Activated CD8-positive, alpha-beta T cell treated with anti-CD3 and anti-CD28 coated beads, Interleukin-2, amount 10 ng/mL, durations not matched to agents 7 days and 5 days (primary cell): ENCODE measurements at regions of chr13 and their contacts with region 1.

Region 1: GRCh38 chr13:114314074-114314912 is at the start of gene CHAMP1:
- DNase-seq: peak; percentile 94
- ATAC-seq: peak; percentile 92
- H3K4me3 Mint-ChIP-seq: peak within 1 kb of the TSS; percentile 78
- H3K27ac Mint-ChIP-seq: peak within 1 kb of the TSS; percentile 78
- H3K4me1 Mint-ChIP-seq: peaks cover 47% of the 10 kb centered on the region
- H3K27me3 Mint-ChIP-seq: no peaks in the 10 kb centered on the region
- total RNA-seq, gene CHAMP1: 31.6 to 33.3 TPM

Region 2: DNA sequence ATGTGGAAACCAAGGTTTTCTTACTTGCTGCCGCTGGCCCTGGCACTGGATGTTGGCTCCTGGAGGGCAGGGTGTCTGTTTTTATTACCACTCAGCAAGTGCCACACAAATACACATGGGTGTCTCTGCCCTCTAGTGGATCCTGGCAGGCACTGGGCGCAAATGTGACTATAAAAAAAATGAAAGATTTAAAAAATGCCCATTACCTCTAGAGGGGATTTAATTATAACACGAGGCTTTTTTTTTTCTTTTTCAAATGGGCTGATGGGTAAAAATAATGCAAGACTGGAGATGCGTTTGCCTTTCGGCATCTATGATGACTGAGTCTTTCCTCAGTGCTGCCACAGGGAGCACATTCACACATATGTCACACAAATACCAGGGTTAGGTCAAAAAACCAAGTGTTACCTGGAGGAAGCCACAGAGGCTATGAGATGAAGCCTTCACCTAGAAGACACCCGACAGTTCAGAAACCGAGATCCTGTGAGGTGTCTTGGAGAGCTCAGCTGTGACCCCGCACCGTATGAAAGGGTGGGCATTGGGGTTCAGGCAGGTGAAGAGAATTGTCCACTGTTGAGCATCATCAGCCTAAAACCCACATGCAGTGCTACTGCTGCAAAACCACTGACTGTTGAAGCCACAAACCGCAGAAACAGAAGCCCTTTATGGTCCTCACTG is 25.7 kb after region 1 on chr13:
- CTCF ChIA-PET with region 1: interaction called, 10 read pairs
- POLR2A ChIA-PET with region 1: interaction called, 3 read pairs
- DNase-seq: peak; percentile 64
- ATAC-seq: peak; percentile 89
- H3K4me3 Mint-ChIP-seq: peak overlapping the region; percentile 13
- H3K27ac Mint-ChIP-seq: peak overlapping the region; percentile 40
- H3K4me1 Mint-ChIP-seq: peaks cover 33% of the 10 kb centered on the region
- H3K27me3 Mint-ChIP-seq: peaks cover 30% of the 10 kb centered on the region